Esophagus muscularis mucosa (tissue), 4 donors: ENCODE measurements at regions of chr7 and their contacts with region 1.

Region 1: DNA sequence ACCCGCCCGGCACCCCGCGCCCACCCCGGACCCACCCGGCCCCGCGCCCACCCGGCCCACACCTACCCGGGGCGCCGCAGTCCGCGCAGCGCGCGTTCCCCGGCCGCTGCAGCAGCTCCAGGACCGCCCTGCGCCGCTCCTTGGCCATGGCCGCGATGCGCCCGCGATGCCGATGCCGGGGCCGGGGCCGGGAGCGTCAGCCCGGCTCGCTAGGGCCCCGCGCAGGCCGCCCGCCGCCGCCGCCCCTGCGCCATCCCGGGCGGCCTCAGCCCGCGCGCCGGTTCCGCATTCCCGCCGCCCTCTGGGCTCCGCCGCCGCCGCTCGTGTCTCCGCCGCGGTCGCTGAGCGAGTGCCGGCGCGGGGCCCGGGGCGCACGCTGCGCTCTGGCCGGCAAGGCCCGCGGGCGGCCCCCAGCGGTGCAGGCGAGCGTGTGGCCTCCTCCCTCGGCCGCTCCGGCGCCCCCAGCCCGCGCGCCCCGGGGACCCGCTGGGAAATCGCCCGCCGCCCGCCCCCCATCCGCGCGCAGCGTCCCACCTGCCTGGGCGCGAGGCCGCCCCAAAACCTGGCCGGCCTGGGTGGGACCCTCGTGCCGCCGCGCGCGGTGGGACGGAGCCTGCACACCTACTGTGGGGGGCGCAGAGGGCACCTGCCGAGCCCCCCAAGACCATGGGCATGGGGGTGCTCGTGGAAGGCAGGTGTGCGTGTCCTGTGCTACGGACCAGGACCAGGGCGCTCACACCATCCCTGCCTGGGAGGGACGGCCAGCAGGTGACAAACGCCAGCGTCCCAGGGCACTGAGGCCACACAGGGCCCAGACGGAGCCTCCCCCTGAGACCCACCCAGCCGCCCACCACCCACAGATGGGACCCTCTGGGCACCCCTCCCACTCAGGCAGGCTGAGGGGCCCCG is at the start of gene ADAP1:
- DNase-seq: no peak
- H3K4me3 ChIP-seq: peak within 1 kb of the TSS; percentile 60 to 85 (median 74)
- H3K27ac ChIP-seq: peak within 1 kb of the TSS; percentile 81 to 95 (median 92)
- H3K4me1 ChIP-seq: peaks cover 11 to 39% (median 36%) of the 10 kb centered on the region in 4 donors
- H3K27me3 ChIP-seq: peaks cover 0 to 22% (median 3%) of the 10 kb centered on the region in 4 donors
- CTCF ChIP-seq: peak in 2 of 3 experiments; percentile 33 to 37
- EP300 ChIP-seq: no peak
- POLR2A ChIP-seq: no peak
- total RNA-seq, gene ADAP1: 41.9 to 94.2 (median 78.3) TPM

Region 2: GRCh38 chr7:909358-910329 is 44.9 kb before region 1 on chr7:
- intact Hi-C with region 1: loop called (anchors 5 kb)
- DNase-seq: no peak
- H3K4me3 ChIP-seq: peak overlapping the region; percentile 40 to 49 (median 43)
- H3K27ac ChIP-seq: peak overlapping the region; percentile 48 to 76 (median 54)
- H3K4me1 ChIP-seq: peaks cover 6 to 38% (median 23%) of the 10 kb centered on the region in 4 donors
- H3K27me3 ChIP-seq: no peaks in the 10 kb centered on the region
- CTCF ChIP-seq: no peak
- EP300 ChIP-seq: no peak
- POLR2A ChIP-seq: no peak

Region 3: GRCh38 chr7:1004018-1004852 is 49.7 kb after region 1 on chr7:
- intact Hi-C with region 1: no loop called
- DNase-seq: no peak
- H3K4me3 ChIP-seq: no peak overlapping the region
- H3K27ac ChIP-seq: no peak overlapping the region
- H3K4me1 ChIP-seq: peaks cover 0 to 4% (median 0%) of the 10 kb centered on the region in 4 donors
- H3K27me3 ChIP-seq: no peaks in the 10 kb centered on the region
- CTCF ChIP-seq: no peak
- EP300 ChIP-seq: no peak
- POLR2A ChIP-seq: no peak